BJ (cell line): ENCODE measurements at regions of chr20 and their contacts with region 1.

Region 1: DNA sequence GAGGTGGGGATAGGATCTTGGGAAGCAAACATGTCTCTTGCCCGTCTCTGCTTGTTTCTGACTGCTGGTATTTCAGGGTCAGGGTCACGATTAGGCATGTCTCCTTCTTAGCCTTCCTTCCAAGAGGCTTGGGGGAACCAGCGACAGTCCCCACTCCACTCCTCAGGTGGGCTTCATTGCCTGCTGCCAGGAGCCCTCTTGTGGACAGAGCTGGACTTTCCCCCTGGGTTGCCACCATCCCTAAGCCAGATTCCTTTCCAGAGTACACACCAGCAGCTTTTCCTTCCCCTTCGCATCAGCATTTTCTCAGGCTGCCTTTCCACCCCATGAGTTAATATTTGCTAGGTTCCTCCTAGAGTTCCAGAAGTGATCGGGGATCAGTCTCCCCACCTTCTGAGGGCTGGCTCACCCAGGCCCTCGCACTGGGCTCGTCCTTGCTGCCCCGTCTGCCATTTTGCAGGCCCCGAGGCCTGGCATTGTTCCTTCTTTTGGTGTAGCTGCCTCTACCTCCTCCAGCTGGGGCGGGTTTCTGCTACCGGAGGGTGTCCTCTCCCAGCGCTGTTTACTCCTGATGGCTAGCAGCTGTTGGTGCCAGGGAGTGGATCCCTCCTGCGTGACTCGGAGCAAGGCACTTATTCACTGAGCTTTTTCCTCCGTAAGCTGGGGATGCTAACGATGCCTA is 8.8 kb upstream of the C20orf144 start:
- DNase-seq: peak; percentile 17
- H3K4me3 ChIP-seq: no peak overlapping the region
- H3K27me3 ChIP-seq: no peaks in the 10 kb centered on the region
- CTCF ChIP-seq: peak; percentile 90

Region 2: GRCh38 chr20:33460711-33461110 is 192.6 kb before region 1 on chr20:
- CTCF ChIA-PET with region 1: interaction called, 12 read pairs
- POLR2A ChIA-PET with region 1: no interaction called
- DNase-seq: no peak
- H3K4me3 ChIP-seq: no peak overlapping the region
- H3K27me3 ChIP-seq: 0 out of 2 replicates have a peak, but pooled peaks cover 1% of the 10 kb centered on the region
- CTCF ChIP-seq: no peak